Naive thymus-derived CD4-positive, alpha-beta T cell (primary cell): ENCODE measurements at regions of chr15 and their contacts with region 1.

Region 1: DNA sequence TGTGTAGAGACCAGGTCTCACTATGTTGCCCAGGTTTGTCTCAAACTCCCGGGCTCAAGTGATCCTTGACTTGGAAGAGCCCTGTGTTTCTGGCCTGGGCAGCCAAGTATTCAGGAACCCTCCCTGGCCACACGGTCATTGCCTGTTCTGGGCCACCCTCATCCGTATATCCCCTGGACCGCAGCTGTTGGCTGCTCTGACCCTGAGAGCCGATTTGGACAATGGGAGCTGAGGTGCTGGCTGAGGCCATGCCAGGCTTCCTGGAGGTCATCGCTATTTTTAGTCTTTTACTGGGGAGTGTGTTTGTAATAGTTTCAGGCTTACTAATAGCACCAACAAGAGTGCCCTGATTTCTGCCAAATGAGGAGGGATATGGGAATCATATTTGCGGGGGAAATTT is 60.7 kb downstream of the ADAMTS7 start:
- DNase-seq: no peak
- ATAC-seq: no peak
- H3K4me3 ChIP-seq: no peak overlapping the region
- H3K4me3 Mint-ChIP-seq: peak overlapping the region; percentile 29 to 76 (median 58)
- H3K27ac ChIP-seq: no peak overlapping the region
- H3K27ac Mint-ChIP-seq: peak overlapping the region in 2 of 9 donors; percentile 22 to 43
- H3K4me1 ChIP-seq: peaks cover 0 to 6% of the 10 kb centered on the region in 2 donors
- H3K4me1 Mint-ChIP-seq: peaks cover 4 to 6% (median 5%) of the 10 kb centered on the region in 7 donors
- H3K27me3 ChIP-seq: no peaks in the 10 kb centered on the region
- H3K27me3 Mint-ChIP-seq: no peaks in the 10 kb centered on the region

Region 2: DNA sequence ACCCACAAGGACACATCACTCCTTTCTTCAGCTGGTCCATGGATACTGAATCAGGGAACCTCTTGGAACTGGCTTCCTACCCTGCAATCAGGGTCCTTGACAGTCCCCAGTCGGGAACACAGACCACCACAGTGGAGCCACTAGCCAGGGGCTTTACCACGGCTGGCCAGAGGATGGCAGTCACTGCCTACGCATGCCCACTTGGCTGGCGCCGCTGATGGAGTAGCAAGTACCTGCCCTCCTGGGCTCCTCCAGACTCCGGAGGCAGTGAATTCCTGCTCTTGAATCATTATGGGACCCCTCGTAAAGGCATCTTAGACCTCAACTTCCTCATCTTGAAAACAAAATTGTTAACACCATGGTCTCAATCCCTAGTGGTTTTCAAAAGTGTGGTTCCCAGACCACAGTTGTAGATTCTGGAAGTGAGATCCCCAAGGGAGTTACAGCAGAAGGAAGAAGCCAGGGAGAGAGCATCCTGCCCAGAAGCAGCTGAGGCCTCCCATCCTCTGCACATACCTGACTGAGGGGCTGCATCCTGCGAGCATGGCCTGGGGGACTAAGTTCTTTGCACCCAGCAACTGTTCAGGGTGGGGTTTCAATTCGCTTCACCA is 442.0 kb before region 1 on chr15:
- CTCF ChIA-PET with region 1: no interaction called
- POLR2A ChIA-PET with region 1: no interaction called
- intact Hi-C with region 1: loop called in 1 of 2 experiments (anchors 5 kb)
- DNase-seq: peak in 5 of 9 donors; percentile 11 to 53 (median 20)
- ATAC-seq: peak; percentile 76
- H3K4me3 ChIP-seq: no peak overlapping the region
- H3K4me3 Mint-ChIP-seq: no peak overlapping the region
- H3K27ac ChIP-seq: no peak overlapping the region
- H3K27ac Mint-ChIP-seq: no peak overlapping the region
- H3K4me1 ChIP-seq: no peaks in the 10 kb centered on the region
- H3K4me1 Mint-ChIP-seq: no peaks in the 10 kb centered on the region
- H3K27me3 ChIP-seq: no peaks in the 10 kb centered on the region
- H3K27me3 Mint-ChIP-seq: peaks cover 0 to 14% (median 10%) of the 10 kb centered on the region in 5 donors

Region 3: GRCh38 chr15:78565097-78565951 is 185.2 kb before region 1 on chr15 and contains the start of gene CHRNA5:
- CTCF ChIA-PET with region 1: no interaction called
- POLR2A ChIA-PET with region 1: no interaction called
- intact Hi-C with region 1: no loop called
- DNase-seq: peak in 8 of 9 donors; percentile 4 to 72 (median 20)
- ATAC-seq: peak; percentile 74
- H3K4me3 ChIP-seq: peak within 1 kb of the TSS; percentile 61
- H3K4me3 Mint-ChIP-seq: peak within 1 kb of the TSS; percentile 80 to 94 (median 88)
- H3K27ac ChIP-seq: no peak within 1 kb of the TSS
- H3K27ac Mint-ChIP-seq: peak within 1 kb of the TSS in 8 of 9 donors; percentile 1 to 65 (median 47)
- H3K4me1 ChIP-seq: peaks cover 6 to 14% of the 10 kb centered on the region in 2 donors
- H3K4me1 Mint-ChIP-seq: peaks cover 13 to 26% (median 20%) of the 10 kb centered on the region in 7 donors
- H3K27me3 ChIP-seq: peaks cover 0 to 6% of the 10 kb centered on the region in 2 donors
- H3K27me3 Mint-ChIP-seq: peaks cover 6 to 40% (median 24%) of the 10 kb centered on the region in 5 donors
- total RNA-seq, gene CHRNA5: 0.10 to 3.4 (median 0.76) TPM in 4 of 5 experiments, not detected in the other

Region 4: GRCh38 chr15:78618490-78618934 is 132.1 kb before region 1 on chr15:
- CTCF ChIA-PET with region 1: no interaction called
- POLR2A ChIA-PET with region 1: no interaction called
- intact Hi-C with region 1: loop called in 1 of 2 experiments (anchors 1 kb)
- DNase-seq: peak; percentile 46 to 78 (median 66)
- ATAC-seq: peak; percentile 62
- H3K4me3 ChIP-seq: no peak overlapping the region
- H3K4me3 Mint-ChIP-seq: peak overlapping the region in 9 of 10 donors; percentile 20 to 66 (median 56)
- H3K27ac ChIP-seq: no peak overlapping the region
- H3K27ac Mint-ChIP-seq: no peak overlapping the region
- H3K4me1 ChIP-seq: no peaks in the 10 kb centered on the region
- H3K4me1 Mint-ChIP-seq: peaks cover 5 to 21% (median 10%) of the 10 kb centered on the region in 7 donors
- H3K27me3 ChIP-seq: peaks cover 0 to 8% of the 10 kb centered on the region in 2 donors
- H3K27me3 Mint-ChIP-seq: peaks cover 33 to 53% (median 40%) of the 10 kb centered on the region in 5 donors

Region 5: DNA sequence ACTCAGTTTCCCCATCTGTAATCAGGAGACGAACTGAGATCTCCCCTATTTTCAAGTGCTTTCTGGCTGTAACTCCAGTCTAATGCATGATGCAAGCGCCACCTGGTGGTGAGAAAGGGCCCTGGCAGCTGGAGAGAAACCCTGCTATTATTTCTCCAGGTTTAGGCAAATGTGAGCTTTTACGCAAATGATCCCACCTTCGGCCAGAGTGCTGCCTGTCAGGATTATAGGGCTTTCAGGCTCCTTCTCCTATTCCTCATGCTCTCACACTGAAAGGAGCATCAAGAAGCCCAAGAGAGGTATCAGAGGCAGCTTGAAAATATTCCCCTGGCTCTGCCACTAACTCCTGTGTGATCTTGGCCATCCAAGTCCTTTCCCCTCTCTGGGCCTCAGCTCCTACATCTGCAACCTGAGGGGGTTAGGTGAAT is 433.9 kb after region 1 on chr15:
- CTCF ChIA-PET with region 1: no interaction called
- POLR2A ChIA-PET with region 1: no interaction called
- intact Hi-C with region 1: loop called in 1 of 2 experiments (anchors 1 kb)
- DNase-seq: peak; percentile 19 to 63 (median 48)
- ATAC-seq: peak; percentile 46
- H3K4me3 ChIP-seq: no peak overlapping the region
- H3K4me3 Mint-ChIP-seq: no peak overlapping the region
- H3K27ac ChIP-seq: no peak overlapping the region
- H3K27ac Mint-ChIP-seq: no peak overlapping the region
- H3K4me1 ChIP-seq: no peaks in the 10 kb centered on the region
- H3K4me1 Mint-ChIP-seq: peaks cover 0 to 4% (median 0%) of the 10 kb centered on the region in 7 donors
- H3K27me3 ChIP-seq: no peaks in the 10 kb centered on the region
- H3K27me3 Mint-ChIP-seq: peaks cover 0 to 14% (median 8%) of the 10 kb centered on the region in 5 donors